Activated T-helper 2 cell treated with anti-CD3 and anti-CD28 coated beads, Interferon-gamma antibody, Interleukin-2, Interleukin-4, amounts not matched to agents 10 μg/mL and 5 μg/mL and 100 μg/mL, durations not matched to agents 14 hours and 24 hours and 36 hours (primary cell): ENCODE measurements at regions of chr3 and their contacts with region 1.

Region 1: GRCh38 chr3:160486459-160486869 is 36.9 kb upstream of the TRIM59 start:
- DNase-seq: no peak
- H3K4me3 Mint-ChIP-seq: no peak overlapping the region
- H3K27ac Mint-ChIP-seq: no peak overlapping the region
- H3K4me1 Mint-ChIP-seq: peaks cover 7% of the 10 kb centered on the region
- H3K27me3 Mint-ChIP-seq: peaks cover 2% of the 10 kb centered on the region

Region 2: GRCh38 chr3:159884661-159885402 is 601.6 kb before region 1 on chr3:
- intact Hi-C with region 1: loop called (anchors 5 kb)
- DNase-seq: no peak
- H3K4me3 Mint-ChIP-seq: no peak overlapping the region
- H3K27ac Mint-ChIP-seq: no peak overlapping the region
- H3K4me1 Mint-ChIP-seq: no peaks in the 10 kb centered on the region
- H3K27me3 Mint-ChIP-seq: peaks cover 27% of the 10 kb centered on the region

Region 3: DNA sequence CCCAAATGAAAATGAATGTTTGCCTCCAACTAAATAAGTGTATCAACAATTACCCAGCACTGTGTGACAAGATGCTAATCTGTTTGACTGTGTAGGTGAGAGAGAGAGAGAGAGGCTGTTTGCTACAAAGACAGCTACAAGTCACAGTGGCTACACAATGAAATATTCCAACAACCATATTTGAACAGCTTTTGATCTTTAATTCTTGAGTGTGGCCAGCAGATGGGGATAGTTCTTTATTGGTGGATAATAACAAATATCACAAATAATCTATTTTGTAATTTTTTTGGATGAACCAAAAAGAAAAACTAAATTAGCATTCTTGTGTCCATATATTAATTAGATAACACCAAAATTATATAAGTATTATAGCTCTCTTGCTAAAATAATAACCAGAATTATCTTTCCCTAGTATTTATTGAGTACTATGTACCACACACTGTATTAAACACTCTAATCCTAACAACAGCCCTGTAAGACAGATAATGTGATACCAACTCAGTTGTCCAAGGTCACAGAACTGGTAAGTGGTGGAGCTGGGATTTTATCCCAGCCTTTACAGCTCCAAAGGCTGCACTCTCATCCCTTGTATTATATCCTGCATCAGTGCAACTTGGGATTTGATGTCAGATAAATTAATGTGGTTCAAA is 323.1 kb before region 1 on chr3:
- intact Hi-C with region 1: loop called (anchors 1 kb)
- DNase-seq: no peak
- H3K4me3 Mint-ChIP-seq: no peak overlapping the region
- H3K27ac Mint-ChIP-seq: no peak overlapping the region
- H3K4me1 Mint-ChIP-seq: peaks cover 1% of the 10 kb centered on the region
- H3K27me3 Mint-ChIP-seq: peaks cover 37% of the 10 kb centered on the region

Region 4: DNA sequence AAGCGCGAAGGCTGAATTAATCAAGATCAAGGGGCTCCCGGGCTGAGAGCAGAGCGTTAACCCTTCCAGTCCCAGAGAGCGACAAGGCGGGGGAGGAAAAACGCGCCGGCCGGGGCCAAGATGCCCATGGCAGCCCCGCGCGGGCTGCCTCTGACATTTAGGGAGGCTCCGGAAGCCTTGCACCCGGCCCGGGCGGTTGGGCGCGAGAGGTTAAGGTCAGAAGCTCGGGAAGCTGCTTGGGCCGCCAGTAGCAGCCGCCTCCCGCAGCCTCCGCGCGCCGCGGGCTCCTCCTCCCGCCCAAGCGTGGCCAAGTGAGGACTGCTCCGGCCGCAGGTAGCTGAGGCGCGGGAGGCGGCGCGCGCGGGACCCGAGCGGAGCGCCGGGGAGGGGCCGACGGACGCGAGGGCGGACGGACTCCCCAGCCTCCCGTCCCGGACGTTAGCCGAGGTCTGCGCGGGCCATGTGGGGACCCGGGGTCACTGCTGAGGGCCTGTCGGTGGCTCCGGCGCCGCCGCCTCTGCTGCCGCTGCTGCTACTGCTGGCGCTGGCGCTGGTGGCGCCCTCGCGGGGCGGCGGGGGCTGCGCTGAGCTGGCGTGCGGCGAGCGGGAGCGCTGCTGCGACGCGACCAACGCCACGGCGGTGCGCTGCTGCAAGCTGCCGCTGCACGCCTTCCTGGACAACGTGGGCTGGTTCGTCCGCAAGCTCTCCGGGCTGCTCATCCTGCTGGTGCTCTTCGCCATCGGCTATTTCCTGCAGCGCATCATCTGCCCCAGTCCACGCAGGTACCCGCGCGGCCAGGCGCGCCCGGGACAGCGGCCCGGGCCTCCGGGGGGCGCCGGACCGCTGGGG is 261.1 kb before region 1 on chr3 and contains the start of gene C3orf80:
- intact Hi-C with region 1: loop called (anchors 10 kb)
- DNase-seq: peak; percentile 38
- H3K4me3 Mint-ChIP-seq: peak within 1 kb of the TSS; percentile 81
- H3K27ac Mint-ChIP-seq: no peak within 1 kb of the TSS
- H3K4me1 Mint-ChIP-seq: peaks cover 15% of the 10 kb centered on the region
- H3K27me3 Mint-ChIP-seq: peaks cover 67% of the 10 kb centered on the region
- total RNA-seq, gene C3orf80: 0.25 and 0.30 TPM in 2 replicates

Region 5: GRCh38 chr3:160449636-160450598 is 36.5 kb before region 1 on chr3 and contains the start of gene TRIM59:
- intact Hi-C with region 1: loop called (anchors 1 kb)
- DNase-seq: peak; percentile 97
- H3K4me3 Mint-ChIP-seq: peak within 1 kb of the TSS; percentile 91
- H3K27ac Mint-ChIP-seq: peak within 1 kb of the TSS; percentile 95
- H3K4me1 Mint-ChIP-seq: peaks cover 33% of the 10 kb centered on the region
- H3K27me3 Mint-ChIP-seq: peaks cover 2% of the 10 kb centered on the region
- total RNA-seq, gene TRIM59: 35.9 and 37.0 TPM in 2 replicates